Vagina (tissue), 2 donors: ENCODE measurements at regions of chr3 and their contacts with region 1.

Region 1: DNA sequence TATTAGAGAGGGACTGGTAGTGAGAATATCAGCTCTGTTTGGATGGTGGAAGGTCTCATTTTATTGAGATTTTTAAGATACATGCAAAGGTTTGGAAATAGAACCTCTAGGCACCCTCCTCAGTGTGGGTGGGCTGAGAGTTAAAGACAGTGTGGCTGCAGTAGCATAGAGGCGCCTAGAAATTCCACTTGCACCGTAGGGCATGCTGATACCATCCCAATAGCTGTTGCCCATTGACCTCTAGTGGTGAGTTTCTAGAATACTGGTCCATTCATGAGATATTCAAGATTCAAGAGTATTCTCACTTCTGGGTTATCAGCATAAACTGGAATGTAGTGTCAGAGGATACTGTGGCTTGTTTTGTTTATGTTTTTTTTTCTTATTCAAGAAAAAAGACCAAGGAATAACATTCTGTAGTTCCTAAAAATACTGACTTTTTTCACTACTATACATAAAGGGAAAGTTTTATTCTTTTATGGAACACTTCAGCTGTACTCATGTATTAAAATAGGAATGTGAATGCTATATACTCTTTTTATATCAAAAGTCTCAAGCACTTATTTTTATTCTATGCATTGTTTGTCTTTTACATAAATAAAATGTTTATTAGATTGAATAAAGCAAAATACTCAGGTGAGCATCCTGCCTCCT is 87.2 kb downstream of the TGFBR2 start:
- DNase-seq: no peak
- H3K4me3 ChIP-seq: no peak overlapping the region
- H3K27ac ChIP-seq: no peak overlapping the region
- H3K4me1 ChIP-seq: peaks cover 44% of the 10 kb centered on the region
- H3K27me3 ChIP-seq: no peaks in the 10 kb centered on the region
- CTCF ChIP-seq: peak; percentile 26 to 78 (median 54)
- POLR2A ChIP-seq: no peak

Region 2: DNA sequence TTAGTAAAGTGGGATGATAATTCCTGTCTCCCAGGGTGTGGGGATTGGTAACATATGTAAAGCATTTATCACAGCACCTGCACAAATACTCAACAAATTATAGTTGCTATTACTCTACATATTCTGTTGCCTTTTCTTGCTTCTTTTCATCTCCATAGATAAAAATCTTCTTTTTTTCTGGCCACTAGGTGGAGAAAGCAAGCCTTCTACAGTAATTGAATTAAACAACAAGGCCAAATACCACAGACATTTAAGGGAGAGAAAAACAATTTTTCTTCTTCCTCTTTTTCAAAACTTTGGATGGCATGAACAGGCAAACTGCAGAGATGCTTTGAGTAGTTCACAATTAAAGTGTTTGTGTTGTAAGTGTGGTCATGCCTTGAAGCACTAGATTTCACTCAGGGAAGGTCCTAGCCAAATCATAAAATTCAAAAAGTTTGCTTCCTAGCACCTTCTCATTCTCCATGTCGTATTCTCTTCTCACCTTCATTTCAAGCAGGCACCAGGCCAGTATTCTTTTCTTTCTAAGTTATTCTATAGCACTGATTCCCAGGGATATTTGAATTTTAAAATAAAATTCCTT is 580.6 kb before region 1 on chr3:
- intact Hi-C with region 1: loop called (anchors 10 kb)
- DNase-seq: no peak
- H3K4me3 ChIP-seq: no peak overlapping the region
- H3K27ac ChIP-seq: no peak overlapping the region
- H3K4me1 ChIP-seq: no peaks in the 10 kb centered on the region
- H3K27me3 ChIP-seq: no peaks in the 10 kb centered on the region
- CTCF ChIP-seq: peak; percentile 41 to 69 (median 44)
- POLR2A ChIP-seq: no peak

Region 3: DNA sequence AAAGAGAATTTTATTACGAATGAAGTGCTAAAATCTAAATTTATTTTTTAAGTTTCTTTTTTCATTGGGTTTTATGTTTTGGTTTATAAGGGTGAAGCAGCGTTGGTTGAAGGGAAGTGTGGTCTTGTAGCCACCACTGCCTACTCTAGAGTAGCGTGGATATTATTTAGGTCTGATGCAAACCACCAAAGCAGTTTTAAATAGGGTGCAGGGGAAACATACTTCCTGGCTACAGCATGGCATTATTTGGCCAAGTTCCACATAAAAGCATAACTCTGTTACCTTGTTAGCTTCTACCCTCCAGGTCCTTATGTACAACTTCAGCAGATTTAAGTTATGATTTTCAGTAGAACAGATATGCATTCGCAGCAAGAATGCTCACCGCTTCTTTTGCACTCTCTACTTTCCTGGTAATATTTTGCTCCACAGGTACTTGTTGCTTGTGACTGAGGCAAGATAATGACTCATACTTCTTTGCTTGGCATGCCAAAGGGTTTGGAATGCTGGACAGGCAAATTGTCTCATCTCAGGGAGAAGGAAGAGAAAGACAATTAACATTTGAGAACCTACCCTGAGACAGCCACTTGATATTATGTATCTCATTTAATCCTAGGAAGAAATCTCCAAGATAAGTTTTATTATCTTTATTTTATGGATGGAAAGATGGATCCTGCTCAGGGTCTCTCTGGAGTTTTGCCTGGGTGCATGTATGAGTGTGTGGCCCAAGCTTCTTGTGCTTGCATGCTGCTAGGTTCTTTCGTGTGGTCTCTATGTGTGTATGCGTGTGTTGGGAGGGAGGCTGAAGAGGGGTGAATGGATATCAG is 81.8 kb before region 1 on chr3:
- intact Hi-C with region 1: loop called (anchors 10 kb)
- DNase-seq: no peak
- H3K4me3 ChIP-seq: peak overlapping the region; percentile 15 to 92
- H3K27ac ChIP-seq: peak overlapping the region; percentile 96
- H3K4me1 ChIP-seq: peaks cover 47% of the 10 kb centered on the region
- H3K27me3 ChIP-seq: no peaks in the 10 kb centered on the region
- CTCF ChIP-seq: no peak
- POLR2A ChIP-seq: no peak

Region 4: GRCh38 chr3:31129241-31129640 is 435.6 kb after region 1 on chr3:
- intact Hi-C with region 1: no loop called
- DNase-seq: no peak
- H3K4me3 ChIP-seq: no peak overlapping the region
- H3K27ac ChIP-seq: no peak overlapping the region
- H3K4me1 ChIP-seq: no peaks in the 10 kb centered on the region
- H3K27me3 ChIP-seq: no peaks in the 10 kb centered on the region
- CTCF ChIP-seq: no peak
- POLR2A ChIP-seq: no peak